Activated T-helper 1 cell treated with anti-CD3 and anti-CD28 coated beads, Interleukin-12 subunit alpha, Interleukin-12 subunit beta, Interleukin-2, Interleukin-4 antibody, amounts not matched to agents 30 ng/mL and 10 ng/mL and 1 ng/mL, durations not matched to agents 14 hours and 24 hours and 36 hours (primary cell): ENCODE measurements at regions of chr12 and their contacts with region 1.

Region 1: GRCh38 chr12:93569656-93570551 is 2.6 kb upstream of the SOCS2 start:
- DNase-seq: peak; percentile 68
- H3K4me3 Mint-ChIP-seq: peak overlapping the region; percentile 88
- H3K27ac Mint-ChIP-seq: peak overlapping the region; percentile 77
- H3K4me1 Mint-ChIP-seq: peaks cover 42% of the 10 kb centered on the region
- H3K27me3 Mint-ChIP-seq: peaks cover 15% of the 10 kb centered on the region

Region 2: DNA sequence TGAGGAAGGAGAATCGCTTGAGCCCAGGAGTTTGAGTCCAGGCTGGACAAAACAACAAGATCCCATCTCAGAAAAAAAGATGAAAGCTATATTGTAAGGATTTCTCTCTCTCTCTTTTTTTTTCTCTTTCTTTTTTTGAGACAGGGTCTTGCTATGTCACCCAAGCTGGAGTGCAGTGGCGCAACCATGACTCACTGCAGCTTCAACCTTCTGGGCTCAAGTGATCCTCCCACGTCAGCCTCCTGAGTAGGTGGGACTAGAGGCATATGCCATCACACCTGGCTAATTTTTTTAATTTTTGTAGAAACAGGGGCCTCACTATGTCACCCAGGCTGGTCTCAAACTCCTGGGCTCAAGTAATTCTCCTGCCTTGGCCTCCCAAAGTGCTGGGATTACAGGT is 108.4 kb before region 1 on chr12:
- intact Hi-C with region 1: no loop called
- DNase-seq: no peak
- H3K4me3 Mint-ChIP-seq: no peak overlapping the region
- H3K27ac Mint-ChIP-seq: no peak overlapping the region
- H3K4me1 Mint-ChIP-seq: peaks cover 5% of the 10 kb centered on the region
- H3K27me3 Mint-ChIP-seq: peaks cover 2% of the 10 kb centered on the region

Region 3: GRCh38 chr12:93502802-93503623 is 66.9 kb before region 1 on chr12:
- intact Hi-C with region 1: loop called (anchors 1 kb)
- DNase-seq: peak; percentile 42
- H3K4me3 Mint-ChIP-seq: no peak overlapping the region
- H3K27ac Mint-ChIP-seq: no peak overlapping the region
- H3K4me1 Mint-ChIP-seq: peaks cover 32% of the 10 kb centered on the region
- H3K27me3 Mint-ChIP-seq: no peaks in the 10 kb centered on the region

Region 4: DNA sequence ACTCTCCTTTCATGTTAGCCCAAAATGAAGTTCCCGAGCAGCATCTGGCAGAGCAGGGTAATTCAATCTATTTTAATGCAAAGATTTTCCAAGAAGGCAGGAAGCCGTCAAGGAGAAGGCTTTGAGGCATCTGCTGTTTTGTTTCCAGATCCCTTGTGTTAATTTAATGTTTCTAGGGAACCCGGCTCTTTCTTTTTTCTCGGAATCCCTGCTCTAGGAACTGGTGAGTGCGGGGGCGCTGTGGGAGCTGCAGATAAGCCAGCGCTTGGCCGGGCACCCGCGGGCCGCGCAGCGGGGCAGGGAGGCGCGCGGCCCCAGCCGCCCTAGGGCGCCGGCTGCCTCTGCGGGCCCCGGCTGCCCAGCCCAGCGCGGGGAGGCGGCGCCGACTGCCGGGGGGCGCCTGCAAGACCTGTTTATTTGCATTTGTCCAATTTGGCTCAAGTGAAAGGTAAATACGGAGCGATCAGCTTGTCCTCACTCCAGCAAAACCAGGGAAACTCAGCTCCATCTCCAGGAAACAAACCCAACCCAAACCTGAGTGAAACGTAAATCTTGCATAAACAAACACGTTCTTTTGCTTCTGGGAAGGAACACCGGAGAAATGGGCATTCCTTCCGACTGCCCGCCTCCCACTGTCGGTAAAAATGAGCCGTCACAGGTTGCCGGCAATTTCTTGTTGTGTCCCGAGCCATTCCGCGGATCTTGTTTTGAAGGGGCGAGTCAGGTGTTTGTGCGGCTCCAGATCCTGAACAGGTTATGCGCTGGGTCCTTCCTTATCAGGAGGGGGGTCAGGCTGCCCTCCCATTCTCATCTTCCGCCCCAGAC is 172.4 kb after region 1 on chr12:
- intact Hi-C with region 1: loop called (anchors 1 kb)
- DNase-seq: peak; percentile 40
- H3K4me3 Mint-ChIP-seq: peak overlapping the region; percentile 86
- H3K27ac Mint-ChIP-seq: peak overlapping the region; percentile 86
- H3K4me1 Mint-ChIP-seq: peaks cover 50% of the 10 kb centered on the region
- H3K27me3 Mint-ChIP-seq: peaks cover 2% of the 10 kb centered on the region

Region 5: GRCh38 chr12:93756288-93756687 is 186.4 kb after region 1 on chr12:
- intact Hi-C with region 1: no loop called
- DNase-seq: no peak
- H3K4me3 Mint-ChIP-seq: no peak overlapping the region
- H3K27ac Mint-ChIP-seq: no peak overlapping the region
- H3K4me1 Mint-ChIP-seq: peaks cover 17% of the 10 kb centered on the region
- H3K27me3 Mint-ChIP-seq: peaks cover 4% of the 10 kb centered on the region

Region 6: DNA sequence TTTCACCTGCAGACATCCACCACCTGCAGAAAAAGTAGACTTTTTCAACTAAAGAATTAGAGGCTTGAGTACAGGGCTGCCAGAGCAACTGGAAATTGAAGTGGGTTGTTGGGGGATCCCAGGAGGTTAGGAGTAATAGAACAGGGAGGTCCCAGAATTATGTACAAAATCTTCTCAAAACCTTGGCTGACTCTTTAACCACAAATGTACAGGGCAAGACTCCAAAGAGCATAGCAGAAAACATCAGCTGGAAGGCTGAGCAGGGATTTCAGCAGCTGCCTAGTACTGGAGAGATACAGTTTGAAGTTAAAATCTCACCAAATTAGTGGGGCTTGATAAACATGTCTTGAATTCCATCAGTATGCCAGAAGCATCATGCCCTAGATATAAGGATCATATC is 298.9 kb after region 1 on chr12:
- intact Hi-C with region 1: no loop called
- DNase-seq: no peak
- H3K4me3 Mint-ChIP-seq: no peak overlapping the region
- H3K27ac Mint-ChIP-seq: no peak overlapping the region
- H3K4me1 Mint-ChIP-seq: no peaks in the 10 kb centered on the region
- H3K27me3 Mint-ChIP-seq: peaks cover 3% of the 10 kb centered on the region

Region 7: GRCh38 chr12:93879476-93880421 is 309.8 kb after region 1 on chr12:
- intact Hi-C with region 1: loop called (anchors 1 kb)
- DNase-seq: no peak
- H3K4me3 Mint-ChIP-seq: peak overlapping the region; percentile 23
- H3K27ac Mint-ChIP-seq: peak overlapping the region; percentile 95
- H3K4me1 Mint-ChIP-seq: peaks cover 35% of the 10 kb centered on the region
- H3K27me3 Mint-ChIP-seq: no peaks in the 10 kb centered on the region

Region 8: GRCh38 chr12:94149119-94149780 is 579.3 kb after region 1 on chr12:
- intact Hi-C with region 1: loop called (anchors 1 kb)
- DNase-seq: peak; percentile 32
- H3K4me3 Mint-ChIP-seq: peak overlapping the region; percentile 92
- H3K27ac Mint-ChIP-seq: peak overlapping the region; percentile 55
- H3K4me1 Mint-ChIP-seq: peaks cover 44% of the 10 kb centered on the region
- H3K27me3 Mint-ChIP-seq: peaks cover 24% of the 10 kb centered on the region